Heart left ventricle (tissue), 16 donors: ENCODE measurements at regions of chr6 and their contacts with region 1.

Region 1: DNA sequence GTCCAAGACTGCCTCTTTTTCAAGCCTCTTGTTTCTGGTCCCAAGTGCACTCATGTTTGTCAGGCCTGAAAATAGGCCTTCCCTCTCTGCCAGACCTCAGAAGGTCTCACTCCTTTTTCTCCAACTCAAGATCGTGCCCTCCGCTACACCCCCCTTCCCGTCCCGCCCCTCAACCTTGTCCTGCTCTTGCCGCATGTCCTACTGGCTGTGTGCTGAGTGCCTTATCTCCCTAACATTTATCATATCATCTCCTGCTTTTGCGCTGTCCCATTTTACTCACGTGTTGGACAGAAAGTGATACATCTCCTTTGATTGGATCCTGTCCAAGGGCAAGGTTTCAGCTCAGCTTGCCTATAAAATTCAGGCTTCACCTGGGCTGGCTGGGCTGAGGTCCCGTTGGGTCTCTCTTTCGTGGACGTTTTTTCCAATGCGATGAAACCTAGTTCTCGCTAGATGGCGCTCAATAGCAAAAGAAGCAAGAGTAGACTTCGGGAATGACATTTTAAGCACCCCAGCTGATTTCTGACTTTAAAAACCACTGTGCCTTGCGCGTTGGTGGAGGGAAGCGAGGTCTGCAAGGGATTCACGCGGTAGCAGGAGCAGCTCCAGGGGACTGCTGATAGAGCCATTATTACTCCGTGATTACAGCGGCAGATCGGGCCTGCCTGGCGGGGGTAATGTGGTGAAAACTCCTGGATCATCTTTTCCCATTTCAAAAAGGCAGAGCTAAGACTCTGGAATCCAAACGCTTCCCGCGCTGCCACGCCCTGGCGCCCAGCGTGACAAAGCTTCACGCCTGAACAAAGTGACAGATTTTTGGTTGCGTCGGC is 137.6 kb downstream of the IMPG1 start:
- DNase-seq: peak in 3 of 5 donors; percentile 24 to 34 (median 28)
- ATAC-seq: peak; percentile 56 to 79 (median 76)
- H3K4me3 ChIP-seq: peak overlapping the region in 10 of 12 donors; percentile 26 to 53 (median 43)
- H3K27ac ChIP-seq: no peak overlapping the region
- H3K4me1 ChIP-seq: peaks cover 0 to 14% (median 4%) of the 10 kb centered on the region in 12 donors
- H3K27me3 ChIP-seq: peaks cover 0 to 3% (median 0%) of the 10 kb centered on the region in 9 donors
- CTCF ChIP-seq: peak; percentile 46 to 78 (median 70)
- POLR2A ChIP-seq: no peak

Region 2: DNA sequence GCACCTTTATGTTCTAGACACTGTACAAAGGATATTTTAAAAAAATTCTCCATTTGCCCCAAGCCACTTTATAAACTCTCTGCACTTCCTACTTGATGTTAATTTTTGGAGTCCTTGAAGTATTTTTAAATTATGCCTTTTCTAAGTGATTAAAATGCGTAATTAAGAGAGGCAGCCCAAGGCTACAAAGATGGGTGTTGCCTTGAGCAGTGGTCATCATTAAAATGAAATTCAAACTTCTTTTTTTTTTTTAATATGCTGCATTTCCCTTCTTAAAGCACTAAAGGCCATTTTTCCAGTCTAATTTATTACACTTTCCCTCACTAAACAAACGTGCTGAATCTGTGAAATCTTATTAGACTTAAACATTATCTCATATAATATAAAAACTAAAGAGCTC is 35.2 kb after region 1 on chr6:
- intact Hi-C with region 1: no loop called
- DNase-seq: no peak
- ATAC-seq: no peak
- H3K4me3 ChIP-seq: no peak overlapping the region
- H3K27ac ChIP-seq: no peak overlapping the region
- H3K4me1 ChIP-seq: no peaks in the 10 kb centered on the region
- H3K27me3 ChIP-seq: no peaks in the 10 kb centered on the region
- CTCF ChIP-seq: no peak
- POLR2A ChIP-seq: no peak

Region 3: DNA sequence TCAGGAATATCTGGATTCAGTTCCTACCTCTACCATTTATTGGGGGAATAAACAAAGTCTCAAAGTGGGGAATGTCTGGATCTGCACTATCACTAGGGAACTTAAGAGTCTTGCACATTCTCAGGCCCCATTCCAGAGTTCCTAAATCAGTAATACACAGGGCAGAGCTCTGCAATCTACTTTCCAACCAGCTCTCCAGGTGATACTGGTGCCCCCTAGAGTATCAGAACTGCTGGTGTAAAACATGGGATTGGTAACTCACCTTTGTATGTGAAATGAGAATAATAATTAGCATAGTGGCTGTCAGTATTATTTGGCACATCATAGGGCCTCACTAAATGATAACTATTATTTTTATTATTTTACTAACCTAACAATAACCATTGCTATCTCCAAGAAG is 416.4 kb after region 1 on chr6:
- intact Hi-C with region 1: loop called in 9 of 10 experiments (anchors 2 to 10 kb)
- DNase-seq: no peak
- ATAC-seq: peak in 3 of 4 donors; percentile 43 to 58 (median 50)
- H3K4me3 ChIP-seq: no peak overlapping the region
- H3K27ac ChIP-seq: no peak overlapping the region
- H3K4me1 ChIP-seq: no peaks in the 10 kb centered on the region
- H3K27me3 ChIP-seq: no peaks in the 10 kb centered on the region
- CTCF ChIP-seq: peak in 7 of 12 donors; percentile 9 to 33 (median 20)
- POLR2A ChIP-seq: no peak

Region 4: DNA sequence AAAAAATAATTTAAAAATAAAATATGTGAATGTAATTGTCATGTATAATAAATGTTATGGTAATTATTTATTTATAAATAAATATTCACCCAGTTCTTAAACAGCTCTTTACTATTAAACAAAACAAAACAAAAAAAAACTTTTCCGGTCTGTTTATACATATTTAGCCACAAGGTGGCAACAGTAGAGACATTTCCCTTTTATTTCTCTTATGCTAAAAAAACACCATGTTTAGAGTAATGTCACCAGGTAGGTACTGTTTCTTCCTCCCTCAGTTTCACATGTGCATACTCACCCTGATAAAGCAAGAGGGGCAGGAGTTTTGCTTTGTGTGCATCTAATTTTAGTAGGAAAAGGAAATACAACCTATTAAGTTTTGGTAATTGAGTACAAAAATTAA is 748.0 kb after region 1 on chr6:
- intact Hi-C with region 1: loop called in 5 of 10 experiments (anchors 5 to 10 kb)
- DNase-seq: no peak
- ATAC-seq: no peak
- H3K4me3 ChIP-seq: no peak overlapping the region
- H3K27ac ChIP-seq: no peak overlapping the region
- H3K4me1 ChIP-seq: no peaks in the 10 kb centered on the region
- H3K27me3 ChIP-seq: no peaks in the 10 kb centered on the region
- CTCF ChIP-seq: peak in 11 of 12 donors; percentile 23 to 54 (median 41)
- POLR2A ChIP-seq: no peak

Region 5: GRCh38 chr6:76877238-76877553 is 942.3 kb after region 1 on chr6:
- intact Hi-C with region 1: loop called in 1 of 10 experiments (anchors 10 kb)
- DNase-seq: no peak
- ATAC-seq: no peak
- H3K4me3 ChIP-seq: no peak overlapping the region
- H3K27ac ChIP-seq: no peak overlapping the region
- H3K4me1 ChIP-seq: no peaks in the 10 kb centered on the region
- H3K27me3 ChIP-seq: no peaks in the 10 kb centered on the region
- CTCF ChIP-seq: no peak
- POLR2A ChIP-seq: no peak